Activated CD4-positive, alpha-beta T cell treated with anti-CD3 and anti-CD28 coated beads, Interleukin-2, amount 10 ng/mL, durations not matched to agents 24 days and 14 days (primary cell): ENCODE measurements at regions of chr10 and their contacts with region 1.

Region 1: DNA sequence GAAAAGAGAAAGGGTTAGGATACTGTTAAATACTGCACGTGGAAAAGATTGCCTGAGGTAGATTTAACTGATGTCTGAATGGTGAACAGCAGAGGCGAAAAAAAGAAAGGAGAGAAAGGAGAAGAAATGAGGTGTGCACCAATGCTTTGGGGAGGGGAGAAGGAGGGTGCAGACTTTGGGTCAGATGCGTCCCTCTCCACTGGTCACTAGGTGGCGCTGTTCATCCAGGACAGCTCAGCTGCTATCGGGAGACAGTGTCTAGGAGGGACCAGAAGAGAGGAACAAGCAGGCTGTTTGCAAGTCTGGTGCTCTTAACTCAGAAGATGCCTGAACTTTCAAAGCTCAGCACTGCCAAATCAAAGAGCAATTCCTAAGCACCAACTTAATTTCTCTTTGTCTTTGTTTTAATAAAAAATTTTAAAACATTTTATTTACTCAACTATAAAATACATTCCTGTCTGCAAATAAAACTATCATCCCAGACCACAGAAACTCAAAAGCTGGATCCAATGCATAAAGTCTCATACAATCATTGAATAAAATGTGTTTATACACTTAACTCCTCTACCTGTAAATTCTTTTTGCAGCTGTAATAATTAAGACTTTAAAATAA is 83.9 kb upstream of the PDLIM1 start:
- DNase-seq: peak; percentile 92
- H3K4me3 Mint-ChIP-seq: no peak overlapping the region
- H3K27ac Mint-ChIP-seq: no peak overlapping the region
- H3K4me1 Mint-ChIP-seq: peaks cover 5% of the 10 kb centered on the region
- H3K27me3 Mint-ChIP-seq: peaks cover 59% of the 10 kb centered on the region

Region 2: GRCh38 chr10:95403700-95404461 is 29.2 kb after region 1 on chr10:
- intact Hi-C with region 1: loop called (anchors 2 kb)
- DNase-seq: no peak
- H3K4me3 Mint-ChIP-seq: no peak overlapping the region
- H3K27ac Mint-ChIP-seq: no peak overlapping the region
- H3K4me1 Mint-ChIP-seq: peaks cover 2% of the 10 kb centered on the region
- H3K27me3 Mint-ChIP-seq: peaks cover 2% of the 10 kb centered on the region

Region 3: GRCh38 chr10:95445837-95446486 is 71.3 kb after region 1 on chr10:
- intact Hi-C with region 1: loop called (anchors 1 kb)
- DNase-seq: peak; percentile 78
- H3K4me3 Mint-ChIP-seq: no peak overlapping the region
- H3K27ac Mint-ChIP-seq: no peak overlapping the region
- H3K4me1 Mint-ChIP-seq: peaks cover 2% of the 10 kb centered on the region
- H3K27me3 Mint-ChIP-seq: peaks cover 21% of the 10 kb centered on the region

Region 4: GRCh38 chr10:95588025-95588424 is 213.3 kb after region 1 on chr10:
- intact Hi-C with region 1: no loop called
- DNase-seq: no peak
- H3K4me3 Mint-ChIP-seq: no peak overlapping the region
- H3K27ac Mint-ChIP-seq: no peak overlapping the region
- H3K4me1 Mint-ChIP-seq: no peaks in the 10 kb centered on the region
- H3K27me3 Mint-ChIP-seq: peaks cover 10% of the 10 kb centered on the region

Region 5: GRCh38 chr10:95601116-95601719 is 226.5 kb after region 1 on chr10:
- intact Hi-C with region 1: loop called (anchors 1 kb)
- DNase-seq: peak; percentile 82
- H3K4me3 Mint-ChIP-seq: no peak overlapping the region
- H3K27ac Mint-ChIP-seq: no peak overlapping the region
- H3K4me1 Mint-ChIP-seq: no peaks in the 10 kb centered on the region
- H3K27me3 Mint-ChIP-seq: peaks cover 16% of the 10 kb centered on the region

Region 6: GRCh38 chr10:95626500-95626899 is 251.8 kb after region 1 on chr10:
- intact Hi-C with region 1: no loop called
- DNase-seq: no peak
- H3K4me3 Mint-ChIP-seq: no peak overlapping the region
- H3K27ac Mint-ChIP-seq: no peak overlapping the region
- H3K4me1 Mint-ChIP-seq: peaks cover 5% of the 10 kb centered on the region
- H3K27me3 Mint-ChIP-seq: no peaks in the 10 kb centered on the region